CD8-positive, alpha-beta T cell (primary cell): ENCODE measurements at regions of chr6 and their contacts with region 1.

Region 1: DNA sequence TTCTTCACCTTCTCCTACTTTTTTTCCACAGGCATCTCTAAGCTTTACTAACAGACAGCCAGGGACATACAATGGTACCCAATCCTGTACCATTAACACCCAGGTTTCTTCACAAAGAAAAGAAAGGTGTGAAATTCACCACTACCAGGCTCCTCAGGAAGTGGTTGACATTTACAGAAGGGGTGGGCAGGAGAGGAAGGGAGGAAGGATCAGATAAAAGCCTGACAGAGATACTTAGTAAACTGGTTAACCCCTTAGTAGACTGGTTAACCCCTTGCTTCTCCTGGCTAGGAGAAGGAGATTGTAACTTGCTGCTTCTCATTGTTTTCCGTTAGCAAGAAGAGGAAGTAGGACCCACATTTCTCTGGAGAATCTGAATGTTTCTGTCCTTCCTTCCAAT is 7.2 kb downstream of the SAMD3 start:
- DNase-seq: peak in 8 of 9 experiments; percentile 18 to 88 (median 49)
- ATAC-seq: peak; percentile 85
- H3K4me3 ChIP-seq: peak overlapping the region; percentile 58 to 65
- H3K4me3 Mint-ChIP-seq: peak overlapping the region; percentile 87
- H3K27ac ChIP-seq: peak overlapping the region; percentile 44 to 51
- H3K27ac Mint-ChIP-seq: peak overlapping the region; percentile 85
- H3K4me1 ChIP-seq: peaks cover 37% of the 10 kb centered on the region
- H3K4me1 Mint-ChIP-seq: peaks cover 82% of the 10 kb centered on the region
- H3K27me3 ChIP-seq: no peaks in the 10 kb centered on the region
- H3K27me3 Mint-ChIP-seq: no peaks in the 10 kb centered on the region
- CTCF ChIP-seq: no peak

Region 2: GRCh38 chr6:129785047-129785755 is 430.3 kb before region 1 on chr6:
- CTCF ChIA-PET with region 1: no interaction called
- POLR2A ChIA-PET with region 1: no interaction called
- intact Hi-C with region 1: no loop called
- DNase-seq: no peak
- ATAC-seq: no peak
- H3K4me3 ChIP-seq: no peak overlapping the region
- H3K4me3 Mint-ChIP-seq: no peak overlapping the region
- H3K27ac ChIP-seq: no peak overlapping the region
- H3K27ac Mint-ChIP-seq: no peak overlapping the region
- H3K4me1 ChIP-seq: no peaks in the 10 kb centered on the region
- H3K4me1 Mint-ChIP-seq: no peaks in the 10 kb centered on the region
- H3K27me3 ChIP-seq: peaks cover 0 to 3% of the 10 kb centered on the region in 2 experiments
- H3K27me3 Mint-ChIP-seq: peaks cover 2% of the 10 kb centered on the region
- CTCF ChIP-seq: no peak

Region 3: DNA sequence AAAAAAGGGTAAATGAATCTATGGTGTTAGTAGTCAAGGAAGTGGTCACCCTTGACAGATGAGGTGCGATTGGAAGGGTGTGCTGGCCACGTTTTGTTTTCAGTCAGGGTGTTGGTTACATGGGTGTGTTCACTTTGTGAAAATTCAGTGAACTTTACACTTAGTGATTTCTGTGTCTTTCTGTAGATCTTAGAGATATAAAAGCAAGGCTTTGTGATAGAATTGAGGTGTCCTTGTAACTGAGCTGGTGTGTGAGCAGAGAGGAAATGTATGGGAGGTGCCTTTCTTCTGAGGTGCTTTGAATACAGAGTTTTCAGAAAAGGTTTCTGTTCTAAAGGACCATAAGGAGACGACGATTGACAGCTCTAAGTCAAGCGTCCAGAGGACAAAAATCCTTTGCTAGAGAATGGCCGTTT is 83.2 kb before region 1 on chr6:
- CTCF ChIA-PET with region 1: no interaction called
- POLR2A ChIA-PET with region 1: interaction called, 6 read pairs
- intact Hi-C with region 1: loop called (anchors 1 to 2 kb)
- DNase-seq: peak; percentile 30 to 89 (median 70)
- ATAC-seq: peak; percentile 85
- H3K4me3 ChIP-seq: peak overlapping the region; percentile 9 to 20
- H3K4me3 Mint-ChIP-seq: peak overlapping the region; percentile 68
- H3K27ac ChIP-seq: peak overlapping the region; percentile 71 to 73
- H3K27ac Mint-ChIP-seq: peak overlapping the region; percentile 93
- H3K4me1 ChIP-seq: peaks cover 61% of the 10 kb centered on the region
- H3K4me1 Mint-ChIP-seq: peaks cover 79% of the 10 kb centered on the region
- H3K27me3 ChIP-seq: no peaks in the 10 kb centered on the region
- H3K27me3 Mint-ChIP-seq: no peaks in the 10 kb centered on the region
- CTCF ChIP-seq: no peak

Region 4: GRCh38 chr6:130183271-130184222 is 32.0 kb before region 1 on chr6:
- CTCF ChIA-PET with region 1: no interaction called
- POLR2A ChIA-PET with region 1: interaction called, 4 read pairs
- intact Hi-C with region 1: loop called (anchors 2 to 5 kb)
- DNase-seq: peak; percentile 6 to 86 (median 47)
- ATAC-seq: peak; percentile 92
- H3K4me3 ChIP-seq: peak overlapping the region; percentile 17 to 40
- H3K4me3 Mint-ChIP-seq: peak overlapping the region; percentile 59
- H3K27ac ChIP-seq: peak overlapping the region; percentile 67 to 82
- H3K27ac Mint-ChIP-seq: peak overlapping the region; percentile 91
- H3K4me1 ChIP-seq: peaks cover 41% of the 10 kb centered on the region
- H3K4me1 Mint-ChIP-seq: peaks cover 59% of the 10 kb centered on the region
- H3K27me3 ChIP-seq: no peaks in the 10 kb centered on the region
- H3K27me3 Mint-ChIP-seq: no peaks in the 10 kb centered on the region
- CTCF ChIP-seq: no peak

Region 5: DNA sequence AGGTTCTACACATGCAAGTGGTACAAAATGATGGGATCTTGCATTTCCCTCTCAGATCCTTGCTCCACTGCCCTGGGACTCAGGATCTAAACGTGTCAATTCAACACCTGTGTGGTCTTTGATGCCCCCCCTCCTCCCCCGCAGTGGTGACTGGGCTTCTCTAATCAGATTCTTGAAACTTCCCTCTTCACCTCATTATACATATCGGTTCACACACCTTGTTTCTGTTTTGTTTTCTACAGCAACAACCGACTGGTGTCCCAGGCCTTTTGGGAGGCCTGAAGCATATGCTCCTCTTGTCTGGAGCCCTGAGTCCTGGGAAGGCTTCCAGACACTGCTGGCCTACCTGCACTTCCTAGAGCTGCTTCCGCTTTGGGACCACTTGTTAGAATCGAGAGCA is 12.7 kb before region 1 on chr6:
- CTCF ChIA-PET with region 1: interaction called, 3 read pairs
- POLR2A ChIA-PET with region 1: interaction called, 6 read pairs
- intact Hi-C with region 1: loop called in 1 of 2 experiments (anchors 2 kb)
- DNase-seq: peak in 4 of 9 experiments; percentile 30 to 55 (median 31)
- ATAC-seq: peak; percentile 62
- H3K4me3 ChIP-seq: no peak overlapping the region
- H3K4me3 Mint-ChIP-seq: peak overlapping the region; percentile 35
- H3K27ac ChIP-seq: peak overlapping the region; percentile 3 to 50
- H3K27ac Mint-ChIP-seq: peak overlapping the region; percentile 86
- H3K4me1 ChIP-seq: peaks cover 24% of the 10 kb centered on the region
- H3K4me1 Mint-ChIP-seq: peaks cover 74% of the 10 kb centered on the region
- H3K27me3 ChIP-seq: no peaks in the 10 kb centered on the region
- H3K27me3 Mint-ChIP-seq: no peaks in the 10 kb centered on the region
- CTCF ChIP-seq: no peak

Region 6: GRCh38 chr6:130269969-130270635 is 54.6 kb after region 1 on chr6:
- CTCF ChIA-PET with region 1: no interaction called
- POLR2A ChIA-PET with region 1: no interaction called
- intact Hi-C with region 1: loop called in 1 of 2 experiments (anchors 10 kb)
- DNase-seq: peak in 1 of 9 experiments; percentile 8
- ATAC-seq: no peak
- H3K4me3 ChIP-seq: no peak overlapping the region
- H3K4me3 Mint-ChIP-seq: no peak overlapping the region
- H3K27ac ChIP-seq: no peak overlapping the region
- H3K27ac Mint-ChIP-seq: no peak overlapping the region
- H3K4me1 ChIP-seq: no peaks in the 10 kb centered on the region
- H3K4me1 Mint-ChIP-seq: no peaks in the 10 kb centered on the region
- H3K27me3 ChIP-seq: no peaks in the 10 kb centered on the region
- H3K27me3 Mint-ChIP-seq: no peaks in the 10 kb centered on the region
- CTCF ChIP-seq: no peak